ENCODE measurements at regions of chr7 and their contacts with region 1.

Region 1: DNA sequence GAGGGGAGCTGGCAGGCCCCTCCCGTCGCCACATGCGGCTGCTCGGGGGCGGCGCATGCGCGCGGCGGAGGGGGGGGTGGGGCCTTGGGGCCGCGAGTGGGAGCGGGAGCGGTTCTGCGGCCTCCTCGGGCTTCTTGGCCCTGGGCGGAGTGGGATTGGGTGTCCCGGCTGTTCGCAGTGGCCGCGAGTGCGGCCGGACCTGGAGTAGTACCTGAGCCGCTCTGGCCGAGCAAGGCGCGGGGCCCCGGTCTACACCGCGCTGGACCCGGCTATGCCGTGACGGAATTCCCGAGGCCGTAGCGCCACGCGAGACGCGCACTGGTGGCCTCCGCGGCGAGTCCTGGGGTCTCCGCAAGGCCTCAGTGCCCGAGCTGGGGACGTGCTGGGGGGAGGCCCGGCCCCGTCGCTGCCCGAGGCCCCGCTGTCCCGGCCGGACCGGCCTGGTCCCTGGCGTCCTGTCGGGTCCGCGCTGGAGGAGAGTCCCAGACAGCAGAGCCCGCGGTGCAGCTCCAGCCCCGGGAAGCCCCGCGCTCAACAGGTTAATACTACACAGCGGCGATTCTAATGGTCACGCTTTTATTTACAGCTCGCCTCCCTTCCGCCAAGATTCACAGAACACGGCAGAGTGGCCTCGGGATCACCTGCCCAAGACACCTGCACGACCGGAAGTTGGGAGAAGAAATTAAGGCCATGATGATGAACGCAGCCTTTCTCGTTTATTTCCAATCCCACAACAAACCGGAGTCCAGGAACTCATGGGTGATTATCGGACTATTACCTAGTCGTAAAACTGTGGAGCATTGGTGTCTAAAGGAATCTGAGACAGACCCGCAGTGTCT is 671 bp upstream of the PAXIP1 start:
- DNase-seq: no peak
- ATAC-seq: peak; percentile 86
- H3K4me3 Mint-ChIP-seq: peak overlapping the region; percentile 92
- H3K27ac Mint-ChIP-seq: peak overlapping the region; percentile 83
- H3K4me1 Mint-ChIP-seq: peaks cover 19% of the 10 kb centered on the region
- H3K27me3 Mint-ChIP-seq: no peaks in the 10 kb centered on the region
- CTCF ChIP-seq: no peak

Region 2: DNA sequence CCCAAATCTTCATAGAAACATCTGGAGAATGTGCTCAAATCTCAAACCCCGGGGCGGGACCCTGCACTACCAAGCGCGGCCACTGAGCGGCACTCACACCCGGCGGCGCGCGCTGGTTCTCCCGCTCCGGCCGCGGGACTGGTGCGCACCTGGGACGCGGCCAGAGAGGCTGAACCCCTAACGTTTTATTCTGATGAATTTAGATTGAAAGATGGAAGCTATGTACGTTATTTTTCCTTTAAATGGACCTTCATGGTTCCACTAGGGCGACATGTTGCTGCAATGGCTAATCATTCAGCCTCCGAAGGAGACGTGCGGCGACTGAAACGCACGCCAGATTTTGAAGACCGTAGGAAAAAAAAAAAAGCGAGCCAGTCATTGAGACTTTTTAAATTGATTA is 187.1 kb after region 1 on chr7:
- CTCF ChIA-PET with region 1: no interaction called
- POLR2A ChIA-PET with region 1: no interaction called
- intact Hi-C with region 1: loop called (anchors 5 kb)
- DNase-seq: peak; percentile 70
- ATAC-seq: peak; percentile 94
- H3K4me3 Mint-ChIP-seq: no peak overlapping the region
- H3K27ac Mint-ChIP-seq: no peak overlapping the region
- H3K4me1 Mint-ChIP-seq: peaks cover 8% of the 10 kb centered on the region
- H3K27me3 Mint-ChIP-seq: peaks cover 7% of the 10 kb centered on the region
- CTCF ChIP-seq: no peak

Region 3: GRCh38 chr7:155344600-155345433 is 341.2 kb after region 1 on chr7:
- CTCF ChIA-PET with region 1: no interaction called
- POLR2A ChIA-PET with region 1: interaction called, 8 read pairs
- intact Hi-C with region 1: loop called (anchors 1 kb)
- DNase-seq: peak; percentile 87
- ATAC-seq: peak; percentile 77
- H3K4me3 Mint-ChIP-seq: peak overlapping the region; percentile 79
- H3K27ac Mint-ChIP-seq: no peak overlapping the region
- H3K4me1 Mint-ChIP-seq: peaks cover 13% of the 10 kb centered on the region
- H3K27me3 Mint-ChIP-seq: no peaks in the 10 kb centered on the region
- CTCF ChIP-seq: peak; percentile 77

Region 4: DNA sequence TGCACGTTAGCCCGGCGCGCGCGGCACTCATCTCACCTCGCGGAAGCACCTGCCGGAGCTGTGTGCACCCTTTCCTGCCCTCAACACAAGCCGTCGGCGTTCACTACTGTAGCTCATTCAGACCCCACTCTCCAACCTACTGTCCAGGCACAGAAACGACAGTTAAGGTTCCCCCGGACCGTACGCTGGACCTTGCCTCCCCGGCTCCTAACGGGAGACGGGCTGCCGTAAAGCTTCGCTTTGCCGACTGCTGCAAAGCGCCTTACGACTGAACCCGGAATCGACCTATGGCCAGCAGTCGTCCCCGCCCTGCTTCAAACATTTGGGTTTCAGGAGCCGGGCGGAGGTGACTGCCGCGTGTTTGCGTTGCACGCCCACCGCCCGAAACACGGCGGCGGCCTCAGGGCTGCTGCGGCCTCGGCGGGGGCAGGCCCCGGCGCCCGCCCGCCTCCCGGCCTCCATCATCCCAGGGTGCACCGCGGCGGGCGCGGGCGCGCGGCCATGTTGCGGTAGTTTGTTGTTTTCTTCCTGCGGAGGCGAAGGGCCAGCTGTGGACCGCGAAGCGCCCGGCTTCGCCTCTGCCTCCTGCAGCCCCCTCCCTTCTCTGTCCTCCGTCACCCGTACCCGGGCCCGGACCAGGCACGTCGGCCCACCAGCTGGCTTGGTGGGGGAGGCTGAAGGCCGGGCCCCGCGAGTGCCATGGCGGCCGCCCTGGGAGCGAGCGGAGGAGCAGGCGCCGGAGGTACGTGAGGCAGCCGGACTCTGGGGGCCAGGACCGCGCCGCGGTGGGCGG is 640.8 kb after region 1 on chr7 and contains the start of gene RBM33:
- CTCF ChIA-PET with region 1: no interaction called
- POLR2A ChIA-PET with region 1: interaction called, 4 read pairs
- intact Hi-C with region 1: loop called (anchors 1 kb)
- DNase-seq: peak; percentile 86
- ATAC-seq: peak; percentile 74
- H3K4me3 Mint-ChIP-seq: peak within 1 kb of the TSS; percentile 98
- H3K27ac Mint-ChIP-seq: peak within 1 kb of the TSS; percentile 98
- H3K4me1 Mint-ChIP-seq: peaks cover 47% of the 10 kb centered on the region
- H3K27me3 Mint-ChIP-seq: no peaks in the 10 kb centered on the region
- CTCF ChIP-seq: no peak
- total RNA-seq, gene RBM33: 107 and 117 TPM in 2 replicates

Region 5: GRCh38 chr7:155752756-155753445 is 749.3 kb after region 1 on chr7:
- CTCF ChIA-PET with region 1: no interaction called
- POLR2A ChIA-PET with region 1: no interaction called
- intact Hi-C with region 1: loop called (anchors 10 kb)
- DNase-seq: no peak
- ATAC-seq: peak; percentile 49
- H3K4me3 Mint-ChIP-seq: peak overlapping the region; percentile 42
- H3K27ac Mint-ChIP-seq: peak overlapping the region; percentile 76
- H3K4me1 Mint-ChIP-seq: peaks cover 81% of the 10 kb centered on the region
- H3K27me3 Mint-ChIP-seq: no peaks in the 10 kb centered on the region
- CTCF ChIP-seq: no peak

Region 6: DNA sequence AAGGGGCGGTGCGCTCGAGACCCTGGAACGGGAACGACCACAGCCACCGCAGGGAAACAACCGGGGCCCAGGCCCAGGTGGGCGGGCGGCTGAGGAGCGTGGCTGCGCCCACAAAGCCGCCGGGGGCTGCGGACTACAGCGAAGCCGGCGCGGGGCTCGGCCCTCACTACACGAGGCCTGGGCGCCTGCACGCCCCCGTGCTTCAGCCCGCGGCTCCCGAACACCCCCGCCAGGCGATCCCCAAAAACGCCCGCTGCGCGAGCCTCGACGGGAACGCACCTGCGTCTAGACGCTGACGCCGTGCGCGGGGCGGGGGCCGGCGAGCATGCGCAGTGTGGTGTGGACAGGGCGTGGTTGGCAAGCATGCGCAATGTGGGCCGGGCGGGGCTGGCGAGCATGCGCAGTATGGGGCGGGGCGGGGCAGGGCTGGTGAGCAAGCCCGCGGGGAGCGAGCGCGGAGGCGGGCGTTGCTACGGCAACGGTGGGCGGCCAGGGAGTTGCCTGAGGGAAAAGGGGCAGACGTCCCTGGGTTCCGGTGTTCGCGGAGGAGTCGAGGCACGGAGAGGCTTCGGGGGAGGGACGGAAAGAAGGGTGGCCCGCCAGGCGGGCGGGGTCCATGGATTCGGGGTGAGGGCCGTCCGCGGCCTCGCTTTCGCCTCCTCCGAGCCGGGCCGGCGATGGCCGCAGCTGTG is 1636.8 kb after region 1 on chr7 and contains the start of gene RNF32:
- CTCF ChIA-PET with region 1: no interaction called
- POLR2A ChIA-PET with region 1: no interaction called
- intact Hi-C with region 1: loop called (anchors 2 kb)
- DNase-seq: peak; percentile 98
- ATAC-seq: peak; percentile 84
- H3K4me3 Mint-ChIP-seq: peak within 1 kb of the TSS; percentile 92
- H3K27ac Mint-ChIP-seq: peak within 1 kb of the TSS; percentile 96
- H3K4me1 Mint-ChIP-seq: peaks cover 29% of the 10 kb centered on the region
- H3K27me3 Mint-ChIP-seq: no peaks in the 10 kb centered on the region
- CTCF ChIP-seq: no peak
- total RNA-seq, gene RNF32: 1.0 and 2.9 TPM in 2 replicates